ENCODE measurements at regions of chr22 and their contacts with region 1.

Region 1: GRCh38 chr22:41091132-41092022 is 1.0 kb upstream of the EP300 start:
- DNase-seq: peak; percentile 100
- ATAC-seq: peak; percentile 99

Region 2: GRCh38 chr22:40950962-40951794 is 140.2 kb before region 1 on chr22 and contains the start of gene RBX1:
- intact Hi-C with region 1: loop called (anchors 1 kb)
- DNase-seq: peak; percentile 99
- ATAC-seq: peak; percentile 97
- total RNA-seq, gene RBX1: 74.1 TPM

Region 3: DNA sequence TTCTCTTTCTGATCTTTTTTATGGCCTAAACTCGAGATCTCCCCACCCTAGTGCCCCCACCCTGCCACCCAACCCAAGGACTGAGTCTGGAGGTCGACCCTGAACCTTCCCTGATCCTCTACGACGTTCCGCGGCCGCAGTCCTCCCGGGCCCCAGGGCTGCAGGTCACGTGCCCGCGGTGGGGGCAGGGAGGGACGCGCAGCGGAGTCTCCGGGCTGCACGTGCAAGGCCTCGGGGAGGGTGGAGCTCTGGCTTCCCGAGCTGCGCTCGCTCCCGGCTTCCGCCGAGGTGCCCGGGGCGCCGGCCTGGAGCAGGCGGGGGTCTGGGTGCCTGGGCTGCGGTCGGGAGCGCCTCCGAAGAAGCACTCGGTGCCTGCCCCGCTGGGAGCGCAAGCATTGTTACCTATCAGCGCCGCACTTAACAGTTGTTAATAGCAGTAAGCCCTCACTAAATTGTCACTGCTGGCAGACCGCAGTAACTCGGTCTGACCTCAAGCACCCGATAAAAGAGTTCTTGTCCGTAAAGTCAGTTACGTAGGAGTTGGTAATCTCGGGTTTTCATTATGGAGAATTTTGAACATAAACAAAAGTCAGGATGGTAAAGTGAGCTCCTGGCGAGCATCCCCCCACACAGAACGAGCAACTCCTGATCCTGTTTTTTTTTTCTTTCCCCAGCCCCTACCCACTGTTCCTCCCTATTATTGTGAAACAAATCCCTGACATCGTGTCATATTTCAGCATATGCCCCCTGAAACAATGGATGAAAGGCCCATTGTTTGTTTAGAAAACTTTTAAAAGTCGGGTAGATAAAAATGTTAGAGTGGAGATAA is 68.7 kb before region 1 on chr22:
- intact Hi-C with region 1: loop called (anchors 1 kb)
- DNase-seq: peak; percentile 98
- ATAC-seq: peak; percentile 95

Region 4: GRCh38 chr22:41048791-41049717 is 42.3 kb before region 1 on chr22:
- intact Hi-C with region 1: loop called (anchors 5 kb)
- DNase-seq: peak; percentile 84
- ATAC-seq: peak; percentile 95

Region 5: GRCh38 chr22:41285820-41286638 is 194.7 kb after region 1 on chr22 and contains the start of gene RANGAP1:
- intact Hi-C with region 1: loop called (anchors 5 kb)
- DNase-seq: peak; percentile 99
- ATAC-seq: peak; percentile 100
- total RNA-seq, gene RANGAP1: 51.5 TPM

Region 6: DNA sequence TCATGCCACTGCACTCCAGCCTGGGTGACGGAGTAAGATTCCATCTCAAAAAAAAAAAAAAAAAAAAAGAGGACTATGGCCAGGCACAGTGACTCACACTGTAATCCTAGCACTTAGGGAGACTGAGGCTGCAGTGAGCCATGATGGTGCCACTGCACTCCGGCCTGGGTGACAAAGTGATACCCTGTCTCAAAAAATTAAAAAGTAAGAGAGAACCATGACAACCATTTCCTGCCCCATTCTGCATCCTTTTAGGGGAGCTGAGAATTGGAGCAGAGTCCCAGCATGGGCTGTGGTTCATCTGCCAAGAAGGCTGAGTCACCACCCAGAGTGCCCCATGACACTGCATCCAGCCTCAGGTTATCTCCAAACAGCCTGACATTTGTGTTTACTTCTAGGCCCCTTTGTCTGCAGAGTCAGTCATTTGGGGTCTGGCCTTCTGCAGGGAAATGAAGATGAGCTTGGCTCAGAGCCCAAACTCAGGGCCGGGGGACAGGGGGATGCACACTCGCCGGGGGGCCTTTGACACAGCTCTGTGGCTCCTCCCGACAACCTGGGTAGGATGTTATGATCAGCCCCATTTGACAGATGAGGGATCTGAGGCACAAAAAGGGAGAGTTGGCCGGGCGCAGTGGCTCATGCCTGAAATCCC is 474.2 kb after region 1 on chr22:
- intact Hi-C with region 1: no loop called
- DNase-seq: no peak
- ATAC-seq: peak; percentile 27